Dendritic cell treated with granulocyte-macrophage colony-stimulating factor and Interleukin-4, amounts not matched to agents 40 ng/mL and 50 ng/mL, for 4 days (primary cell): ENCODE measurements at regions of chr3 and their contacts with region 1.

Region 1: GRCh38 chr3:42067326-42067725 is 23.8 kb upstream of the TRAK1 start:
- H3K4me3 Mint-ChIP-seq: no peak overlapping the region
- H3K27ac Mint-ChIP-seq: peak overlapping the region; percentile 86
- H3K4me1 Mint-ChIP-seq: peaks cover 58% of the 10 kb centered on the region
- H3K27me3 Mint-ChIP-seq: no peaks in the 10 kb centered on the region

Region 2: GRCh38 chr3:42025370-42026138 is 41.8 kb before region 1 on chr3:
- intact Hi-C with region 1: loop called (anchors 5 kb)
- H3K4me3 Mint-ChIP-seq: peak overlapping the region; percentile 66
- H3K27ac Mint-ChIP-seq: peak overlapping the region; percentile 92
- H3K4me1 Mint-ChIP-seq: peaks cover 67% of the 10 kb centered on the region
- H3K27me3 Mint-ChIP-seq: no peaks in the 10 kb centered on the region

Region 3: GRCh38 chr3:42387802-42388651 is 320.7 kb after region 1 on chr3:
- intact Hi-C with region 1: no loop called
- H3K4me3 Mint-ChIP-seq: no peak overlapping the region
- H3K27ac Mint-ChIP-seq: no peak overlapping the region
- H3K4me1 Mint-ChIP-seq: no peaks in the 10 kb centered on the region
- H3K27me3 Mint-ChIP-seq: peaks cover 7% of the 10 kb centered on the region